ENCODE measurements at regions of chr18 and their contacts with region 1.

Region 1: GRCh38 chr18:212780-213179 is 54.4 kb downstream of the USP14 start:
- DNase-seq: no peak
- H3K4me3 ChIP-seq: no peak overlapping the region
- H3K27ac ChIP-seq: no peak overlapping the region
- H3K4me1 ChIP-seq: no peaks in the 10 kb centered on the region
- H3K27me3 ChIP-seq: no peaks in the 10 kb centered on the region
- CTCF ChIP-seq: no peak; the same call in 1 of the 2 replicates

Region 2: DNA sequence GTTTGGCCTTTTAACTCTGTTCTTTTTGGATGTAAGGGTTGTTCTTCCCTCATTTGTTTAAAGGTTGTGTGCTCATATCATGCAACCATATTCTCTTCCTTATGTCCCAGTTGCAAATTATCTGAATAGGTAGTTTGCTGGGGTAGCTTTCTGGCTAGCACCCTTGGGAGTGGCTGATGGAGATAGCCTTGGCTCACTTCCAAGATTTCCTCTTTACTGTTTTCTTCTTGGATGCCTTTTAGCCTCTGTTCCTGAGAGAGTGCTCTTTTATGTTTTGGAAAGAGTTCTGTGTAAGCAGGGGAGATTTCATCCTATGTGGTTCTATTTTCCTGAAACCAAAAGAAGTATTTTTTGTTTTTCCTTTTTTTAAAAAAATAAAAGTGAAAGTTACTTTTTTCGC is 29.0 kb before region 1 on chr18:
- CTCF ChIA-PET with region 1: no interaction called
- POLR2A ChIA-PET with region 1: no interaction called
- intact Hi-C with region 1: loop called (anchors 1 kb)
- DNase-seq: no peak
- H3K4me3 ChIP-seq: no peak overlapping the region
- H3K27ac ChIP-seq: no peak overlapping the region
- H3K4me1 ChIP-seq: no peaks in the 10 kb centered on the region
- H3K27me3 ChIP-seq: no peaks in the 10 kb centered on the region
- CTCF ChIP-seq: no peak

Region 3: DNA sequence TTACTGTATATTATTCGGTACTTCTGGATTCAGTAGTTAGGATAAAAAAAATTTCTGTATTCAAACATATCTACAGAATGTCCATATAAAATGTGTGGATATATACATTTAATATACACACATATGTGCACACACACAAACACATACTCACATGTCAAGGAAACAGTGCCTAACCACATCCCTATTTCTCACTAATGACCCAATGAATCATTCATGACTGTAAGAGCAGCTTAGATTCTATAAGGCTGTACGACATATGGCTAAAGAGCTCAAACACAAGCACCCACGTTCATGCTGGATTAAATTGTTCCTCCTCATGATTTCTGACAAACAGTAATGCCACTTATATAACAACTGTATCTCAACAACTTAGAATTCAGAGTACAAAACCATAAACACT is 1149.2 kb after region 1 on chr18:
- CTCF ChIA-PET with region 1: no interaction called
- POLR2A ChIA-PET with region 1: interaction called, 23 read pairs
- intact Hi-C with region 1: no loop called
- DNase-seq: no peak
- H3K4me3 ChIP-seq: no peak overlapping the region
- H3K27ac ChIP-seq: no peak overlapping the region
- H3K4me1 ChIP-seq: no peaks in the 10 kb centered on the region
- H3K27me3 ChIP-seq: no peaks in the 10 kb centered on the region
- CTCF ChIP-seq: no peak

Measured in PC-9 (cell line).